ENCODE measurements at regions of chr21 and their contacts with region 1.

Region 1: DNA sequence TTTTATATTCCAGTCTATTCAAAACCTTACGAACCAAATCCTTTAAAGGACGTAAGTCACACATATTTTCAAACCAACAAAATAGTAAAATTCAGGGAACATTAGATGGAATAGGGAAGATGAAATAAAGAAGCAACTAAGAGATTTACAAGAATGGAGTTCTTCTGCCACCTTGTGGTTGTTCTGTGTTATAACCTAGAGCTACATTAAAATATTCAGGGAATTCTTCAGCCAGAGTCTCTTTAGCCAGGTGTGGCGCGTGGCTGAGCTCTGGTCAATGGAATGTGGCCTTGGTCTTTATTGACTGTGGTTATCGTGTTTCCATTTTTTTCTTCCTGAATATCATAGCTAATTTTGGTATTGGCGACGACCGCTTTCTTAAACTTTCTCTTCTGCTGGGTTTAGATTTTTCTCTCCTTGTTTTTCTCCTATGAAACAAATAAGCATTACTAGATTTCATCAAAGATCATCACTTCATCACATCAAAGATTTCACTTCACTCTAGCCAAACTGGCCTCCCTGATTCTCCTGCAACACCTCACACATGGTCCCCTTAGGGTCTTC is 221.3 kb downstream of the MRPL39 start:
- DNase-seq: no peak
- H3K4me3 ChIP-seq: no peak overlapping the region
- H3K27ac ChIP-seq: no peak overlapping the region
- H3K4me1 ChIP-seq: no peaks in the 10 kb centered on the region
- H3K27me3 ChIP-seq: no peaks in the 10 kb centered on the region
- CTCF ChIP-seq: peak; percentile 8 to 84 (median 82)

Region 2: DNA sequence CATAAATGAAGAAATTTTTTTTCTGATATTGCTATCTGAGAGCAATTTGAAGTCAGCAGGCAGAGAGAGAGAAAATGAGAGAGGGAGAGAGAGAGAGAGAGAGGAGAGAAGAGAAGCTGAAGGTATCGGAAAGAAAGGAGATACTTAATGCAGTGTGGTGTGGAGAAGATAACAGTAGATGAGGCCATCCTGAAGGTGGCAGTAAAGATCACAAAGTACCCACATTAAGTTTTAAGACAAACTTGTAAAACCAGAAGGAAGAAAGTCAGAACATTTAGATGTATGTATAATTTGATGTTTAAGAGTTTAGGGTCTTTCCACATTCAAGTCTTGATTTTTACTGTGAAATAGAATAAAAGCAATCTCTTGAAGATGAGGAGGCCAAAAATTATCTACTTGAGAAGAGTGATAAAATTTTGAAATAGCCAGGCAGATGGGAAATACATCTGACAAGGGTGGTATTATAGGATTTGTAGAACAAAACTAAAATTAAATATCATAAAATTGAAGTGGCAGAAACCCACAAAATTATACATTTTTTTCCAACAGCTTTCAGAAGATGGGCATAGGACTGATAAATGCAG is 1532.1 kb before region 1 on chr21:
- intact Hi-C with region 1: loop called (anchors 10 kb)
- DNase-seq: no peak
- H3K4me3 ChIP-seq: no peak overlapping the region
- H3K27ac ChIP-seq: no peak overlapping the region
- H3K4me1 ChIP-seq: no peaks in the 10 kb centered on the region
- H3K27me3 ChIP-seq: no peaks in the 10 kb centered on the region
- CTCF ChIP-seq: peak in 1 of 3 experiments; percentile 22

Region 3: DNA sequence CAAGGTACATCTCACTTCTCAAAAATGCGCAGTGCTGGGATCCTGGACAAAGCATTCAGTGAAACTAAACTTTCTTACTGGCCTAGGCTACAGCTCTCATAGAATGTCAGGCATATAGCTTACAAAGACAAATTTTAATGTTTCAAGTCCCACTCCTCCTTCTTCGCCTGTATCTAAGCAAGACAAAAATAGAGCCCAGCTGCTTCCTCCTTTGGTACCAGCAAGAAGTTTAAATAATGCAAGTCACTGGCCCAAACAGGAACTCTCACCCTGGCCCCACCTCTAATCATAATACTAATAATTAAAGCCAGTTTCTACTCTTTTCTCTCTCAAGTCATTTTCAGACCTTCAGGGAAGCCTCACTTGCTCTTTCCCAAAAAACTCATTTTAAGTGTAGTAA is 1046.6 kb before region 1 on chr21:
- intact Hi-C with region 1: no loop called
- DNase-seq: no peak
- H3K4me3 ChIP-seq: no peak overlapping the region
- H3K27ac ChIP-seq: no peak overlapping the region
- H3K4me1 ChIP-seq: no peaks in the 10 kb centered on the region
- H3K27me3 ChIP-seq: no peaks in the 10 kb centered on the region
- CTCF ChIP-seq: no peak

Region 4: GRCh38 chr21:25518491-25518911 is 132.5 kb after region 1 on chr21:
- intact Hi-C with region 1: no loop called
- DNase-seq: no peak
- H3K4me3 ChIP-seq: no peak overlapping the region
- H3K27ac ChIP-seq: no peak overlapping the region
- H3K4me1 ChIP-seq: no peaks in the 10 kb centered on the region
- H3K27me3 ChIP-seq: no peaks in the 10 kb centered on the region
- CTCF ChIP-seq: no peak

Measured in ascending aorta (tissue), 2 donors.